ENCODE measurements at regions of chr3 and their contacts with region 1.

Region 1: DNA sequence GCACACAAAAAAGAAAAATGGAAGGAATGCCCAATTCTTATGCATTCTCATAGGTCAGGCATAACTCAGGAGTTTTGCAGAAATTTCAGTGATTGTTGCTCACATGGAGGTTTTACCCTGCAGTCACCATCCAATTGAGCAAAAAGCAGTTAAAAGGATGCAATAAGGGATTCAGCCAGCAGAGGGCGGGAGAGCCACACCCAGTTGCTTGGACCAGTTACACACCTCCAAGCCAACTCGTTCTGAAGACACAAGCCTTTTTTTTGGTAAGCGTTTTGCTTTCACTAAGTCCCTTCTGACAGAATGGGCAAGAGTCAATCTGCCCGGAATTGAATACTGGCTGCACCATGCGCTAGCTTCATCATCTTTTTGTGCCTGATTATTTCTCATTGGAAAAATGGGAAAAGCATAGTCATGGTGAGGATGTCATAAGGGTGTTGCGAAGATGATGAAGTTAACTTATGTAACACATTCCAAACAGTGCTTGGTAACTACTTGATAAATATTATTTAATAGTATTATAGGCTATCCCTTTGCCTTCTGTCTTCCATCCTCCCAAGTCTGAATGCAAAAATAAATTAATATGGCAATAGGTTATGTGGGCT is 154.4 kb upstream of the SGO1 start:
- DNase-seq: peak; percentile 25
- ATAC-seq: peak; percentile 91
- H3K4me3 ChIP-seq: no peak overlapping the region
- H3K27ac ChIP-seq: no peak overlapping the region
- H3K4me1 ChIP-seq: no peaks in the 10 kb centered on the region
- H3K27me3 ChIP-seq: no peaks in the 10 kb centered on the region
- CTCF ChIP-seq: peak; percentile 85 to 92 (median 86)
- EP300 ChIP-seq: no peak
- POLR2A ChIP-seq: no peak
- RAD21 ChIP-seq: peak; percentile 83

Region 2: GRCh38 chr3:20225769-20226168 is 114.7 kb before region 1 on chr3:
- CTCF ChIA-PET with region 1: interaction called, 3 read pairs
- POLR2A ChIA-PET with region 1: no interaction called
- RAD21 ChIA-PET with region 1: no interaction called
- SMC1A ChIA-PET with region 1: no interaction called
- in situ Hi-C with region 1: no loop called
- intact Hi-C with region 1: loop called (anchors 5 kb)
- DNase-seq: no peak
- ATAC-seq: peak; percentile 66
- H3K4me3 ChIP-seq: no peak overlapping the region
- H3K27ac ChIP-seq: no peak overlapping the region
- H3K4me1 ChIP-seq: no peaks in the 10 kb centered on the region
- H3K27me3 ChIP-seq: no peaks in the 10 kb centered on the region
- CTCF ChIP-seq: peak; percentile 25 to 52 (median 40); a peak in 4 of 6 replicates
- EP300 ChIP-seq: no peak
- POLR2A ChIP-seq: no peak
- RAD21 ChIP-seq: peak; percentile 73

Region 3: DNA sequence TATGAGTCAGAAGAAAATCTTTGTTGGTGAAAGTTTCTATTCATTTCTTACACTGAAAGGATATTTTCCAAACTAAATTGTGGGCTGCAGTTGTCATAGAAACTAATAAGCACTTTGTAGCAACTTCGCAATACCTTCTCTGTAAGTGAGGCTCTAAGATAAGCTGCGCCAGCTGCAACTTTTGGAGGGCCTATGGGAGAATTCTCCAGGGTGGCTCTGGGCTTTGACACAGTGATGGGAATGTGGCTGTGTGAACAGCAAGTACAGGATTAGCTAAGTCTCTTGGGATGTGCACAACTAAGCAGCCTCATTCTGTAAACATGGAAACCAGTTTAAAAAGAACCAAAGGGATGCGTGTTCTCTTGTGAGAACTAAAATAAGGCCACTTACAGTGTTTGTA is 29.8 kb before region 1 on chr3:
- CTCF ChIA-PET with region 1: no interaction called
- POLR2A ChIA-PET with region 1: no interaction called
- RAD21 ChIA-PET with region 1: no interaction called
- SMC1A ChIA-PET with region 1: no interaction called
- in situ Hi-C with region 1: no loop called
- intact Hi-C with region 1: no loop called
- DNase-seq: no peak
- ATAC-seq: no peak
- H3K4me3 ChIP-seq: no peak overlapping the region
- H3K27ac ChIP-seq: no peak overlapping the region
- H3K4me1 ChIP-seq: no peaks in the 10 kb centered on the region
- H3K27me3 ChIP-seq: no peaks in the 10 kb centered on the region
- CTCF ChIP-seq: no peak
- EP300 ChIP-seq: no peak
- POLR2A ChIP-seq: no peak
- RAD21 ChIP-seq: no peak

Region 4: GRCh38 chr3:20669675-20670074 is 329.2 kb after region 1 on chr3:
- CTCF ChIA-PET with region 1: no interaction called
- POLR2A ChIA-PET with region 1: no interaction called
- RAD21 ChIA-PET with region 1: no interaction called
- SMC1A ChIA-PET with region 1: no interaction called
- in situ Hi-C with region 1: no loop called
- intact Hi-C with region 1: loop called (anchors 10 kb)
- DNase-seq: no peak
- ATAC-seq: no peak
- H3K4me3 ChIP-seq: no peak overlapping the region
- H3K27ac ChIP-seq: no peak overlapping the region
- H3K4me1 ChIP-seq: no peaks in the 10 kb centered on the region
- H3K27me3 ChIP-seq: no peaks in the 10 kb centered on the region
- CTCF ChIP-seq: no peak
- EP300 ChIP-seq: no peak
- POLR2A ChIP-seq: no peak
- RAD21 ChIP-seq: no peak

Region 5: GRCh38 chr3:21484057-21484827 is 1143.8 kb after region 1 on chr3:
- CTCF ChIA-PET with region 1: interaction called, 4 read pairs
- POLR2A ChIA-PET with region 1: no interaction called
- RAD21 ChIA-PET with region 1: interaction called, 3 read pairs
- SMC1A ChIA-PET with region 1: no interaction called
- in situ Hi-C with region 1: loop called (anchors 25 kb)
- intact Hi-C with region 1: loop called (anchors 2 kb)
- DNase-seq: peak; percentile 4
- ATAC-seq: peak; percentile 96
- H3K4me3 ChIP-seq: no peak overlapping the region
- H3K27ac ChIP-seq: no peak overlapping the region
- H3K4me1 ChIP-seq: no peaks in the 10 kb centered on the region
- H3K27me3 ChIP-seq: no peaks in the 10 kb centered on the region
- CTCF ChIP-seq: peak; percentile 62 to 69 (median 67)
- EP300 ChIP-seq: no peak
- POLR2A ChIP-seq: no peak
- RAD21 ChIP-seq: peak; percentile 69

Region 6: DNA sequence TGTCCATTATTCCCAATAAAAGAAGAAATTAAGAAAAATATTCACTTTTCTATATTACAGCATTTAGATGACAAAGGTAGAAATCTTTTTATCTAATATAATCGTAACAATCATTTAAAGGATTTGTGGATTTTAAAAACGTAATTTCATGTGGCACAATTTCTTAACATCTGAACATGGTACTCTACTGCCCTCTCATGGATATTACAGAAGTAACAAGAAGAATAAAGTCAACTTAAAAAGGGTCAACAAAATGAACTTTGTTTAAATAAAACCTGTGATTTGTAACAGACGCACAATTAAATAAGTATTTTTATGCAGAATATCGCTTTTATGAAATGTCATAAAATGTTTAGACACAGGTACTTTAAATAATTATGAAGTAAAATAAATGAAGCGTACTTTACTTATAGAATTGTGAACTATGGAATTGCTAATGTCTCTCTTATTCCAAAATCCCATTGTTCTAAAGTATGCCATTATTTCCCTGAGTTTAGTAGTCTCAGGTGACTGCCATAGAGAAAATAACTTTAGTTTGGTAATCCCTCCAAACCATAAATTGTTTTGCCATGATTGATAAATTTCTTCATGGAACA is 1777.4 kb after region 1 on chr3:
- CTCF ChIA-PET with region 1: no interaction called
- POLR2A ChIA-PET with region 1: no interaction called
- RAD21 ChIA-PET with region 1: no interaction called
- SMC1A ChIA-PET with region 1: no interaction called
- in situ Hi-C with region 1: no loop called
- intact Hi-C with region 1: loop called (anchors 5 kb)
- DNase-seq: no peak
- ATAC-seq: no peak
- H3K4me3 ChIP-seq: no peak overlapping the region
- H3K27ac ChIP-seq: no peak overlapping the region
- H3K4me1 ChIP-seq: no peaks in the 10 kb centered on the region
- H3K27me3 ChIP-seq: no peaks in the 10 kb centered on the region
- CTCF ChIP-seq: peak in 2 of 3 experiments; percentile 39 to 40; a peak in 3 of 6 replicates
- EP300 ChIP-seq: no peak
- POLR2A ChIP-seq: no peak
- RAD21 ChIP-seq: peak; percentile 66